CD8-positive, alpha-beta T cell (primary cell): ENCODE measurements at regions of chr1 and their contacts with region 1.

Region 1: DNA sequence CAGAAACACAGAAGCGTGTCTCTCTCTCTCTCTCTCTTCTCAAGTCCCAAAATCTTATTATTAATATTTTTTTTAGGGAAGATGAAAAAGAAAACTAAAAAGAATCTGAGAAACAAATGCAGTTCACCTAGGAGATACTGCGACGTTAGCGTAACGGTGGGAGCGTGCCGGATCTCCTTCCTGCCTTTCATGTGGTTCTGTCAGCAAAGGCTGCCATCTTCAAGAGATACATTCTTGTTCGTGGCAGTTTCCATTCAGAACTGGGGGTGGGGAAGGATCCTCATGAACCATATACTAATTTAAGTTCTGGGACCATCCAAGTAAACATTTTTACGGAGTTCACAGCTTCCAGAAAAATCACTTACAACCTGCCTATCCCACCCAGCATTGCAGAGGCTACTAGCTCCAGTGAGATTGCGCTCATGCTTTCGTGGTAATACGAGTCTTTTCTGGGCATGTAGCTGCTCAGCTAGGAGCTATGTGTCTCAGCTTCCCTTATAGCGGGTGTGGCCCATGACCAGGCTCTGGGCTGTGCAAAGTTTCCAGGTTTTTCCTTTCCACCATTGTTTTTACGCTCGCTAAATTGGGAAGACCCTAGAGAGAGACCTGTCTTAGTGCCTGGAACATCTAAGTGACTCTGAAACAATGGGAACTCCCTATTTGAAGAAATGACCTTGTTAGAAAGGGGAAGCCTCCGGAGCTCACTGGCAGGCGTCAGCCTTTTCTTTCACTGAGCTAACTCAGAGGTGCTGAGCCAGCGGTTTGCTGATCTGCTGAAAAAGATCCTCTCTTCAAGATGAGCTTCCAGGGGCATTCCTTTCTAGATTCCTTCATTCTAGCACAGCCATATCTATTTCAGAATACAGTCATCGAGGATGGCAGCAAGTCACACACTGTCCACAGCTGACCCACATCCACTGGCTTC is 17.3 kb downstream of the SLAMF1 start:
- DNase-seq: peak; percentile 53 to 92 (median 75)
- ATAC-seq: peak; percentile 81
- H3K4me3 ChIP-seq: peak overlapping the region; percentile 19 to 38
- H3K4me3 Mint-ChIP-seq: peak overlapping the region; percentile 76
- H3K27ac ChIP-seq: peak overlapping the region; percentile 91 to 95
- H3K27ac Mint-ChIP-seq: peak overlapping the region; percentile 97
- H3K4me1 ChIP-seq: peaks cover 91% of the 10 kb centered on the region
- H3K4me1 Mint-ChIP-seq: peaks cover 99% of the 10 kb centered on the region
- H3K27me3 ChIP-seq: no peaks in the 10 kb centered on the region
- H3K27me3 Mint-ChIP-seq: no peaks in the 10 kb centered on the region
- CTCF ChIP-seq: no peak

Region 2: GRCh38 chr1:160567858-160568682 is 61.5 kb before region 1 on chr1:
- CTCF ChIA-PET with region 1: no interaction called
- POLR2A ChIA-PET with region 1: no interaction called
- intact Hi-C with region 1: no loop called
- DNase-seq: peak; percentile 35 to 87 (median 77)
- ATAC-seq: peak; percentile 95
- H3K4me3 ChIP-seq: peak overlapping the region in 1 of 2 experiments; percentile 9
- H3K4me3 Mint-ChIP-seq: peak overlapping the region; percentile 59
- H3K27ac ChIP-seq: peak overlapping the region; percentile 55 to 80
- H3K27ac Mint-ChIP-seq: peak overlapping the region; percentile 95
- H3K4me1 ChIP-seq: peaks cover 93% of the 10 kb centered on the region
- H3K4me1 Mint-ChIP-seq: peaks cover 95% of the 10 kb centered on the region
- H3K27me3 ChIP-seq: no peaks in the 10 kb centered on the region
- H3K27me3 Mint-ChIP-seq: no peaks in the 10 kb centered on the region
- CTCF ChIP-seq: no peak

Region 3: GRCh38 chr1:160646711-160647328 is 17.3 kb after region 1 on chr1 and contains the start of gene SLAMF1:
- CTCF ChIA-PET with region 1: interaction called, 8 read pairs
- POLR2A ChIA-PET with region 1: interaction called, 11 read pairs
- intact Hi-C with region 1: no loop called
- DNase-seq: peak in 5 of 9 experiments; percentile 34 to 71 (median 52)
- ATAC-seq: peak; percentile 74
- H3K4me3 ChIP-seq: peak within 1 kb of the TSS; percentile 51 to 60
- H3K4me3 Mint-ChIP-seq: peak within 1 kb of the TSS; percentile 87
- H3K27ac ChIP-seq: peak within 1 kb of the TSS; percentile 57 to 58
- H3K27ac Mint-ChIP-seq: peak within 1 kb of the TSS; percentile 88
- H3K4me1 ChIP-seq: peaks cover 73% of the 10 kb centered on the region
- H3K4me1 Mint-ChIP-seq: peaks cover 89% of the 10 kb centered on the region
- H3K27me3 ChIP-seq: no peaks in the 10 kb centered on the region
- H3K27me3 Mint-ChIP-seq: no peaks in the 10 kb centered on the region
- CTCF ChIP-seq: no peak
- total RNA-seq, gene SLAMF1: 12.8 to 18.6 TPM